IMR-90 (cell line): ENCODE measurements at regions of chr4 and their contacts with region 1.

Region 1: GRCh38 chr4:105387466-105387865 is 86.4 kb downstream of the PPA2 start:
- DNase-seq: peak; percentile 23
- ATAC-seq: no peak
- H3K4me3 ChIP-seq: no peak overlapping the region
- H3K27ac ChIP-seq: no peak overlapping the region
- H3K4me1 ChIP-seq: no peaks in the 10 kb centered on the region
- H3K27me3 ChIP-seq: no peaks in the 10 kb centered on the region
- CTCF ChIP-seq: no peak
- POLR2A ChIP-seq: no peak
- RAD21 ChIP-seq: no peak

Region 2: DNA sequence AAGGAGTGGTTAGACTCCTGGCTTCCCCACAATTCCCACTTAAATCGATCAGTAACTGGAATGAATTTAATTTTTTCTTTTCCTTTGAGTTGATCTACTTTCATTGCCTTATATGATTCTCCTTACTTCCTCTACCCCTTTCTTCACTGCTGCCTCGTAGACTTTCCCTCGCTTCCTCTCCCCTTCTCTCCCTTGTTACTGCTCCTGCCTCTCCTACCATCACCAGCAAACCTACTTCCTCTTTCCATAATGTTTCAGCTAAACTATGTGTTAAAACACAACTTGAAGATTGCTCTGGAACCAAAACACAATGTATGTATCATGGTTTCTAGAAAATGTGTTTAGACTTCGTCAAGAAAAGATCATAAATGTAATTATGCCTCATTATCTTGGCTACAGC is 372.8 kb before region 1 on chr4:
- CTCF ChIA-PET with region 1: no interaction called
- POLR2A ChIA-PET with region 1: no interaction called
- dilution Hi-C with region 1: no loop called
- in situ Hi-C with region 1: no loop called
- intact Hi-C with region 1: no loop called
- DNase-seq: no peak
- ATAC-seq: no peak
- H3K4me3 ChIP-seq: no peak overlapping the region
- H3K27ac ChIP-seq: no peak overlapping the region
- H3K4me1 ChIP-seq: no peaks in the 10 kb centered on the region
- H3K27me3 ChIP-seq: no peaks in the 10 kb centered on the region
- CTCF ChIP-seq: no peak
- POLR2A ChIP-seq: no peak
- RAD21 ChIP-seq: no peak

Region 3: GRCh38 chr4:105373324-105373723 is 14.1 kb before region 1 on chr4:
- CTCF ChIA-PET with region 1: interaction called, 3 read pairs
- POLR2A ChIA-PET with region 1: no interaction called
- dilution Hi-C with region 1: no loop called
- in situ Hi-C with region 1: no loop called
- intact Hi-C with region 1: loop called (anchors 2 kb)
- DNase-seq: no peak
- ATAC-seq: no peak
- H3K4me3 ChIP-seq: no peak overlapping the region
- H3K27ac ChIP-seq: no peak overlapping the region
- H3K4me1 ChIP-seq: peaks cover 4% of the 10 kb centered on the region
- H3K27me3 ChIP-seq: no peaks in the 10 kb centered on the region
- CTCF ChIP-seq: no peak
- POLR2A ChIP-seq: no peak
- RAD21 ChIP-seq: no peak

Region 4: GRCh38 chr4:105406924-105407323 is 19.5 kb after region 1 on chr4:
- CTCF ChIA-PET with region 1: no interaction called
- POLR2A ChIA-PET with region 1: no interaction called
- dilution Hi-C with region 1: no loop called
- in situ Hi-C with region 1: no loop called
- intact Hi-C with region 1: no loop called
- DNase-seq: no peak
- ATAC-seq: no peak
- H3K4me3 ChIP-seq: no peak overlapping the region
- H3K27ac ChIP-seq: no peak overlapping the region
- H3K4me1 ChIP-seq: no peaks in the 10 kb centered on the region
- H3K27me3 ChIP-seq: no peaks in the 10 kb centered on the region
- CTCF ChIP-seq: no peak
- POLR2A ChIP-seq: no peak
- RAD21 ChIP-seq: no peak

Region 5: DNA sequence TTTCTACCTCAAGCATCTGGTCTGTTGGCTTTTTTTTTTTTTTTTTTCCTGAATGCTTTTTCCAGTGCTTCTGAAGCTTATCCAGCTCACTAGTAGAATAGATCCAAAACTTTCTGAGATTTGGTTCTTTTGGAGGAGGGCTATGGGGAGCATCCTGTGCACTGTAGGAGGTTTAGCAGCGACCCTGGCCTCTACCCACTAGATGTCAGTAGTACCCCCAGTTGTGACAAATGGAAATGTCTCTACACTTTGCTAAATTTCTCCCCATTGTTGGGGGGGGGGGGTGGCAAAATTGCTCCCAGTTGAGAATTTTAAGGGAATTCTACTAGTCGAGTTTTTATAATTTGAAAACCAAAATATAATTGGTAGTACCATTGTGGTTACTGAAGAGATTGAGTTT is 109.4 kb after region 1 on chr4:
- CTCF ChIA-PET with region 1: no interaction called
- POLR2A ChIA-PET with region 1: no interaction called
- dilution Hi-C with region 1: no loop called
- in situ Hi-C with region 1: no loop called
- intact Hi-C with region 1: no loop called
- DNase-seq: no peak
- ATAC-seq: no peak
- H3K4me3 ChIP-seq: no peak overlapping the region
- H3K27ac ChIP-seq: no peak overlapping the region
- H3K4me1 ChIP-seq: no peaks in the 10 kb centered on the region
- H3K27me3 ChIP-seq: no peaks in the 10 kb centered on the region
- CTCF ChIP-seq: no peak
- POLR2A ChIP-seq: no peak
- RAD21 ChIP-seq: no peak